ENCODE measurements at regions of chr4 and their contacts with region 1.

Region 1: GRCh38 chr4:3442959-3443749 is 1.4 kb downstream of the HGFAC start:
- DNase-seq: peak in 3 of 4 donors; percentile 14 to 89 (median 34)
- ATAC-seq: peak; percentile 78
- H3K4me3 ChIP-seq: no peak overlapping the region
- H3K27ac ChIP-seq: no peak overlapping the region
- H3K4me1 ChIP-seq: no peaks in the 10 kb centered on the region
- H3K27me3 ChIP-seq: peaks cover 0 to 24% of the 10 kb centered on the region in 2 donors
- CTCF ChIP-seq: peak; percentile 98 to 99

Region 2: GRCh38 chr4:3193531-3194203 is 249.5 kb before region 1 on chr4:
- intact Hi-C with region 1: loop called in 1 of 2 experiments (anchors 10 kb)
- DNase-seq: no peak
- ATAC-seq: no peak
- H3K4me3 ChIP-seq: no peak overlapping the region
- H3K27ac ChIP-seq: no peak overlapping the region
- H3K4me1 ChIP-seq: no peaks in the 10 kb centered on the region
- H3K27me3 ChIP-seq: no peaks in the 10 kb centered on the region
- CTCF ChIP-seq: peak in 1 of 2 donors; percentile 29

Region 3: DNA sequence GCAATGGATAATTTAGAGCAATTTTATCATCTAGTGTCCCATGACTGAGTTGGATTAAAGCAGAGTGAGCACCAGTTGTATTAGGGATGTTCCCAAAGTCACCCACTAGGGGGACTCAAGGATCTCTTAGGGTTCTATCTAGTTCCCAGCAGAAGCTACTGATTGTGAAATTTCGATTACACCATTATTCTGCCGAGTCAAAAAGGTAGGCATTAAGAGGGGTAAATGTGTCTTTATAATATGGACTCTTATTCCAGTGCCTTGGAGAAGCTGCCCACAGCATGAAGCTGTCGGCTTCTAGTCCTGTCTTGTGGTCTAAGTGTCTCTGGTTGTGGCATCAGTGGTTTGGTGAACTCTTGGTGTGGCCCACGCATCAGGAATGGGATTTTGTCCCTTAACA is 97.0 kb before region 1 on chr4:
- intact Hi-C with region 1: loop called in 1 of 2 experiments (anchors 2 kb)
- DNase-seq: peak in 2 of 4 donors; percentile 66 to 84
- ATAC-seq: peak; percentile 98
- H3K4me3 ChIP-seq: no peak overlapping the region
- H3K27ac ChIP-seq: no peak overlapping the region
- H3K4me1 ChIP-seq: peaks cover 0 to 16% of the 10 kb centered on the region in 2 donors
- H3K27me3 ChIP-seq: no peaks in the 10 kb centered on the region
- CTCF ChIP-seq: peak; percentile 86 to 91

Region 4: GRCh38 chr4:4334798-4335520 is 891.8 kb after region 1 on chr4:
- intact Hi-C with region 1: no loop called
- DNase-seq: peak in 3 of 4 donors; percentile 46 to 84 (median 69)
- ATAC-seq: peak; percentile 46
- H3K4me3 ChIP-seq: no peak overlapping the region
- H3K27ac ChIP-seq: no peak overlapping the region
- H3K4me1 ChIP-seq: no peaks in the 10 kb centered on the region
- H3K27me3 ChIP-seq: peaks cover 0 to 7% of the 10 kb centered on the region in 2 donors
- CTCF ChIP-seq: peak; percentile 67 to 77